Mammary epithelial cell (primary cell): ENCODE measurements at regions of chr14 and their contacts with region 1.

Region 1: DNA sequence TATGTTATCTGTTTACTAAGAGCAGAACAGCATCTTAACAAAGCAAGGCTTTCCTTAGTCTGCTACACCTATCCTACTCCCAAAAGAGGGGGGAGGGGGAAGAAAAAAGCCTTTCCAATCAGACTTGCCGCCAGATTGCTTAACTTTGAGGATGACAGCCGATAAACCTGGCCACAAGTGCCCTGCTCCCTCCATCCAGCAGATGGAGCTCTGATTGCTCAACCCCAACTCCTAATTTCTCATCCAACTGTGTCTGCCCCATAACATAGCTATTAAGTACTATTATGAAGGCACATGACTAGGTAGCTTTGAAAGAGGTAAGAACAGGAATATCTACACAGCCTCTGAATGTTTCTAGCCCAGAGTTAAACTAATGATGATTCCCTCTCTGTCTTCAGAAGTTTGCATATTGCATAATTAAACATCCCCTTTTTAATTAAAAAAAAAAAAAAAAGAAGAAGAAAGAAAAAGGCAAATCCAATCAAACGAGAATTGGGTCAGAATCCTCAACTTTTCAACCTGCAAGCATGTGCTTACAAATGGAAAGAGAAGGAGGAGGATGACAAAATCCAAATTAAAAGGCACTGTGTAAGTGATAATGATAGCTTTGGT is 247.4 kb downstream of the GALC start:
- DNase-seq: peak; percentile 41
- H3K4me3 ChIP-seq: no peak overlapping the region
- H3K27ac ChIP-seq: no peak overlapping the region
- H3K4me1 ChIP-seq: no peaks in the 10 kb centered on the region
- H3K27me3 ChIP-seq: no peaks in the 10 kb centered on the region
- CTCF ChIP-seq: peak; percentile 88 to 92

Region 2: DNA sequence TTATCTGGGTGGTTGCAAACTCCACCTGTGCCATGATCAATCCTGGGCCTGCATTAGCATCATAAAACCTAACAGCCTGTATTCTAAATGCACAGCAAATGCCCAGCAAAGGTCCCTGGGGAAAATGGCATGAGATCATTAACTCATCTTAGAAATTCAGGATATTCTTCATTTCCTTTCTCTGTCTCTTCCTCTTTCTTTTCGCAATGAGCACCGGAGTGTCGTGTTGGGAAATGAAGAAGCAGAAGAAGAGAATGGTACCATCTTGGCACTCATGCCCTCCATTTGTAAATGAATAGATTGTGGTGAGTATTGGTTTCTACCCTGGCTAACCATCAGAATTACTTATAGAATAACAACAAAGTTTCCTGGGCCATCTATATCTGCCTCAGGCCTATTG is 53.8 kb after region 1 on chr14:
- CTCF ChIA-PET with region 1: no interaction called
- dilution Hi-C with region 1: no loop called
- in situ Hi-C with region 1: no loop called
- intact Hi-C with region 1: no loop called
- DNase-seq: no peak
- H3K4me3 ChIP-seq: no peak overlapping the region
- H3K27ac ChIP-seq: no peak overlapping the region
- H3K4me1 ChIP-seq: no peaks in the 10 kb centered on the region
- H3K27me3 ChIP-seq: no peaks in the 10 kb centered on the region
- CTCF ChIP-seq: no peak

Region 3: DNA sequence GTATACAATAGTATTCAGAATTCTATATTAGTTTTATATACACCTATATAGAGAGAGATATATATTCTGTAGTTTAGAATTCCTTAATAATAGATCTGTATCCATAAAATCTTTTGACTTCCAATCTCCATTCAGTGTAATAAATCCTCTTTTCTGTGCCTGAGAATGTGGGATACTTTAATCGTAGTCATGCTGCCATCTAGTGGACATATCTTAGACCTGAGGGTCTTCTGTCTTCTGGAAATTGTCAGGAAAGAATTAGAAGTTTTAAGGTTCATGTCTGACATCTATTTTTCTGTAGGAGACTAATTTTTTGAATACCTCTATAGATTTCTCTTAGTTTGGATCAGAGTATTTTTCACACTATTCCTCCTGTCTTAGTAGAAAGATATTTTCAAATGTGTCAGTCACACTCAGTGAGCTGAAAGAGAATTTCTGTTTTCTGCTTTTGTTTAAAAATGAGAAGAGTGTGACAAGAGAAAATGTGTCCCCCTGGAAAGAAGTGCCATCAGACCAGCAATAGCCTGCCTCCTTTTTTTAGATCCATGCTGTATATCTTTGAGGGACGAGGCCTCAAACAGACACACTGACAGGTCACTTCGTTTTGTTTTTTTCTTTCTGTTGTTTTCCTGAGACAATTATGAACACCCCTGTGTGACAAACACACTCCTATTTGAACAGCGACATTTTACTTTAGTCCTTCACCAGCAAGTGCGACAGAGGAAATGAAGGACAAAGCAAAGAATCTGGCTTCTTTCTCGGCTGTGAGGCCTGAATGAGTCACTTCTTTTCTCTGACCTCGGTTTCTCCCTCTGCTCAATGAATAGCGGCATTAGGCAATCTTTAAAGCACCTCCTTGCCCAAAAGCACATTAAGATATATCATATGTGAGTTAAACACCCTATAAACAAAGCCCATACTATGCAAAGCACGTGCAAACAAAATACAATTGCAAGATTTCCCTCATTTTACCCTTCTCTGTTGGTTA is 151.1 kb after region 1 on chr14:
- CTCF ChIA-PET with region 1: interaction called, 17 read pairs
- dilution Hi-C with region 1: no loop called
- in situ Hi-C with region 1: loop called (anchors 5 kb)
- intact Hi-C with region 1: loop called (anchors 1 kb)
- DNase-seq: peak; percentile 37
- H3K4me3 ChIP-seq: no peak overlapping the region
- H3K27ac ChIP-seq: no peak overlapping the region
- H3K4me1 ChIP-seq: no peaks in the 10 kb centered on the region
- H3K27me3 ChIP-seq: no peaks in the 10 kb centered on the region
- CTCF ChIP-seq: peak; percentile 68 to 69